ENCODE measurements at regions of chr19 and their contacts with region 1.

Region 1: GRCh38 chr19:17555480-17555928 is at the start of gene COLGALT1:
- DNase-seq: peak; percentile 94 to 100 (median 98)
- ATAC-seq: peak; percentile 98
- H3K4me3 ChIP-seq: peak within 1 kb of the TSS; percentile 94
- H3K4me3 Mint-ChIP-seq: peak within 1 kb of the TSS; percentile 87
- H3K27ac ChIP-seq: peak within 1 kb of the TSS in 1 of 2 donors; percentile 7
- H3K27ac Mint-ChIP-seq: peak within 1 kb of the TSS; percentile 67
- H3K4me1 ChIP-seq: peaks cover 24% of the 10 kb centered on the region
- H3K4me1 Mint-ChIP-seq: peaks cover 21% of the 10 kb centered on the region
- H3K27me3 ChIP-seq: no peaks in the 10 kb centered on the region
- H3K27me3 Mint-ChIP-seq: no peaks in the 10 kb centered on the region
- CTCF ChIP-seq: no peak
- total RNA-seq, gene COLGALT1: 30.3 to 30.6 TPM

Region 2: GRCh38 chr19:17496337-17496997 is 59.0 kb before region 1 on chr19:
- CTCF ChIA-PET with region 1: interaction called, 7 read pairs
- POLR2A ChIA-PET with region 1: no interaction called
- intact Hi-C with region 1: loop called in 1 of 2 experiments (anchors 10 kb)
- DNase-seq: peak; percentile 68 to 91 (median 76)
- ATAC-seq: peak; percentile 99
- H3K4me3 ChIP-seq: no peak overlapping the region
- H3K4me3 Mint-ChIP-seq: no peak overlapping the region
- H3K27ac ChIP-seq: no peak overlapping the region
- H3K27ac Mint-ChIP-seq: no peak overlapping the region
- H3K4me1 ChIP-seq: peaks cover 25% of the 10 kb centered on the region
- H3K4me1 Mint-ChIP-seq: peaks cover 17% of the 10 kb centered on the region
- H3K27me3 ChIP-seq: no peaks in the 10 kb centered on the region
- H3K27me3 Mint-ChIP-seq: no peaks in the 10 kb centered on the region
- CTCF ChIP-seq: peak; percentile 96

Region 3: DNA sequence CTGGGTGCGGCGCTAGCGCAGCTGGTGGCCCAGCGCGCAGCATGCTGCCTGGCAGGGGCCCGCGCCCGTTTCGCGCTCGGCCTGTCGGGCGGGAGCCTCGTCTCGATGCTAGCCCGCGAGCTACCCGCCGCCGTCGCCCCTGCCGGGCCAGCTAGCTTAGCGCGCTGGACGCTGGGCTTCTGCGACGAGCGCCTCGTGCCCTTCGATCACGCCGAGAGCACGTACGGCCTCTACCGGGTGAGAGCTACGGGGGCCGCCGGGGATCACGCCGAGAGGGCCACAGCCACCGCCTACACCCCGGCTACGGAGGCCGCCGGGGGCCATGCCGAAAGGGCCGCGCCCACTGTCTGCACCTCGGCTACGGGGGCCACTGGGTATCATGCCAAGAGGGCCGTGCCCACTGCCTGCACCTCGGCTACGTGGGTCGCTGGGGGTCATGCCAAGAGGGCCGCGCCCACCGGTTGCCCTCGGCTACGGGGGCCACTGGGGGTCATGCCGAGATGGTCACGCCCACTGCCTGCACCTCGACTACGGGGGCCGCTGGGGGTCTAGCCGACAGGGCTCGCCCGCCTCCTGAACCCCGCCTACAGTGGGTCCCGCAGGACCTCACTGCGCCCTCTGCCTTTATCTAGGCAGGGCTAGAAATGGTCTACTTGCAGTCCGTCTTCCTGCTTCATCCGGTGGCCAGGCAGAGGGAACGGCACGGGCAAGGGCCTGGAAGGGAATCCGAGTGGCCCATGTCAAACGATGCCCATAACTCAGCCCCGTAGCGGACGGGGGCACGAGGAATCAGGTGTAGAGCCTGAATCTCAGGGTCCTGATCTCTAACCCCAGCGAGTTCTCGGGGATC is 43.6 kb before region 1 on chr19:
- CTCF ChIA-PET with region 1: no interaction called
- POLR2A ChIA-PET with region 1: interaction called, 7 read pairs
- intact Hi-C with region 1: loop called (anchors 1 to 5 kb)
- DNase-seq: peak; percentile 73 to 92 (median 82)
- ATAC-seq: peak; percentile 75
- H3K4me3 ChIP-seq: peak overlapping the region; percentile 82
- H3K4me3 Mint-ChIP-seq: peak overlapping the region; percentile 93
- H3K27ac ChIP-seq: peak overlapping the region; percentile 64 to 94
- H3K27ac Mint-ChIP-seq: peak overlapping the region; percentile 80
- H3K4me1 ChIP-seq: peaks cover 19% of the 10 kb centered on the region
- H3K4me1 Mint-ChIP-seq: peaks cover 33% of the 10 kb centered on the region
- H3K27me3 ChIP-seq: no peaks in the 10 kb centered on the region
- H3K27me3 Mint-ChIP-seq: no peaks in the 10 kb centered on the region
- CTCF ChIP-seq: no peak

Region 4: DNA sequence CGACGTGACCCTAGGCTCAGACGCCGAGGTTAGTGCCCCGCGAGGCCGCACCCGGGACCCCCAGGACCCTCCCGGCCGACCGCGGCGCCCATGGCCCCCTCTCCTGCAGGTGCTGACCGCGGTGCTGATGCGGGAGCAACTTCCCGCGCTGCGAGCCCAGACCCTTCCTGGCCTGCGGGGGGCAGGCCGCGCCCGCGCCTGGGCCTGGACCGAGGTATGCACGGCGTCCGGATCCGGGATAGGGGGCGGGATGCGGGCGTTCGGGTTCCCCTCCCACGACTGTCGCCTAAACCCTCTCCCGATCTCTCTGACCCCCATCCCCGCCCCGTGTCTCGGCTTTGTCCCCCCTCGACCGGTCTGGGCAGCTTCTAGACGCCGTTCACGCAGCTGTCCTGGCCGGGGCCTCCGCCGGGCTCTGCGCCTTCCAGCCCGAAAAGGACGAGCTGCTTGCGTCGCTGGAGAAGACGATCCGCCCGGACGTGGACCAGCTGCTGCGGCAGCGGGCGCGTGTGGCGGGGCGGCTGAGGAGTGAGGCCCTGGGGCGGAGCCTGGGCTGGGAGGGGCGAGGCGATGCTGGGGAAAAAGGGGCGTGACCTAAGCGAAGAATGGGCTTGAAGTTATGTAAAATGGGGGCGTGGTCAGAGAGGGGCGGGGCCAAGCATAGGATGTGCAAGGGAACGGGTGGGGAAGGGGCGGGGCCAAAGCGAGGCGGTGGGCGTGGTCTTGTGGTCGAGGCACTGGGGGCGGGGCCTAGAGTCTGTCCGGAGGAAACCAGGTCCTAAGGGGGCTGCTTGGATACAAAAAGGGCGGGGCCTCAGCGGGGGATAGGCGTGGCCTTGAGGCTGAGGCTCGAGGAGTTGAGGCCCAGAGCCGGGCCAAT is 16.0 kb before region 1 on chr19:
- CTCF ChIA-PET with region 1: interaction called, 3 read pairs
- POLR2A ChIA-PET with region 1: interaction called, 3 read pairs
- intact Hi-C with region 1: loop called in 1 of 2 experiments (anchors 1 kb)
- DNase-seq: peak; percentile 84 to 99 (median 94)
- ATAC-seq: peak; percentile 96
- H3K4me3 ChIP-seq: peak overlapping the region; percentile 61
- H3K4me3 Mint-ChIP-seq: peak overlapping the region; percentile 93
- H3K27ac ChIP-seq: no peak overlapping the region
- H3K27ac Mint-ChIP-seq: peak overlapping the region; percentile 67
- H3K4me1 ChIP-seq: peaks cover 17% of the 10 kb centered on the region
- H3K4me1 Mint-ChIP-seq: peaks cover 12% of the 10 kb centered on the region
- H3K27me3 ChIP-seq: no peaks in the 10 kb centered on the region
- H3K27me3 Mint-ChIP-seq: no peaks in the 10 kb centered on the region
- CTCF ChIP-seq: peak; percentile 4

Region 5: GRCh38 chr19:17605761-17606745 is 50.5 kb after region 1 on chr19:
- CTCF ChIA-PET with region 1: no interaction called
- POLR2A ChIA-PET with region 1: no interaction called
- intact Hi-C with region 1: no loop called
- DNase-seq: peak; percentile 65 to 95 (median 82)
- ATAC-seq: peak; percentile 97
- H3K4me3 ChIP-seq: peak overlapping the region; percentile 43
- H3K4me3 Mint-ChIP-seq: peak overlapping the region; percentile 81
- H3K27ac ChIP-seq: no peak overlapping the region
- H3K27ac Mint-ChIP-seq: peak overlapping the region; percentile 27
- H3K4me1 ChIP-seq: peaks cover 14% of the 10 kb centered on the region
- H3K4me1 Mint-ChIP-seq: peaks cover 11% of the 10 kb centered on the region
- H3K27me3 ChIP-seq: peaks cover 21 to 25% of the 10 kb centered on the region in 2 experiments
- H3K27me3 Mint-ChIP-seq: peaks cover 36% of the 10 kb centered on the region
- CTCF ChIP-seq: peak; percentile 58

Region 6: GRCh38 chr19:17718947-17719711 is 163.6 kb after region 1 on chr19 and contains the start of gene MAP1S:
- CTCF ChIA-PET with region 1: no interaction called
- POLR2A ChIA-PET with region 1: no interaction called
- intact Hi-C with region 1: loop called in 1 of 2 experiments (anchors 5 kb)
- DNase-seq: peak; percentile 26 to 74 (median 52)
- ATAC-seq: peak; percentile 88
- H3K4me3 ChIP-seq: peak within 1 kb of the TSS; percentile 92
- H3K4me3 Mint-ChIP-seq: peak within 1 kb of the TSS; percentile 95
- H3K27ac ChIP-seq: no peak within 1 kb of the TSS
- H3K27ac Mint-ChIP-seq: peak within 1 kb of the TSS; percentile 90
- H3K4me1 ChIP-seq: peaks cover 39% of the 10 kb centered on the region
- H3K4me1 Mint-ChIP-seq: peaks cover 36% of the 10 kb centered on the region
- H3K27me3 ChIP-seq: no peaks in the 10 kb centered on the region
- H3K27me3 Mint-ChIP-seq: no peaks in the 10 kb centered on the region
- CTCF ChIP-seq: no peak
- total RNA-seq, gene MAP1S: 18.1 to 21.4 TPM

Region 7: DNA sequence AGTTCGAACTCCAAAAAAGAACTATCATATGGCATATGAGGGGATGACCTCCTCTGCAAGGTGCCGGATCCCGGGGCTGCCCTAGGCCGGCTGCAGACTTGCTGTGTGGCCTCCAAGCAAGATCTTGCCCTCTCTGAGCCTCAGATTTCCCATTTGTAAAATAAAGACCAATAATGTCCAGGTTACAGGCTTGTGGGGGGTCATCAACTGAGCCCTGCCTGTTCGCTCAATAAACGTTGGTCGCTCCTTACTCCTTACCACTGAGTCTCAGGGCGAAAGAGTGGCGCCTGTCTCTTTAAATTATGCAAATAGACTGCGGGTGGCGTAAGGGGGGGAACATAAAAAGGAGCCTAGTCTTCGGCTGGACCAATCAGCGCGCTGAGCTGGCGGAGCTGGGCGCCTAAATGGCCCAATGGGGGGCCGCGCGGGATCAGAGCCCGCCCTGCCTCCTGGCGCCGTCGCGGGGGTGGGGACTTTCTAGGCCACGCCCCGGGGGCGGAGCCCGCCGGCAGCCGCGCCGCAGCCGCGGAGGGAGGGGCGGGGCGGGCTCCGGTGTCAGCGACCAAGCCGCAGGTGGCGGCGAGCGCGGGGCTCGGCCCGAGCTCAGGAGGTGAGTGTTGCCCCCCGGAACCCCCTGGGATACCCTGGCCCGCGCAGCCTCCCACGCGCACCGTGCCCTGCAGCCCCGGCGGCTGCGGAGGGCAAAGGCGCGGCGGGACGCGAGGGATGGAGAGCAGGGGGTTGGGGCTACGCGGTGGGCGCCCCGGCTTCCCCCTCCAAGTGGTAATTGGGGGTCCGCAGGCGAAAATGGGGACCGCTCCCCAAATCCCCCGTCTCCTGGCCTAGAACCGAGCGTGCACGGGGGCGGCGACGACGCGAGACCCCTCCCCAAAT is 191.9 kb after region 1 on chr19:
- CTCF ChIA-PET with region 1: no interaction called
- POLR2A ChIA-PET with region 1: no interaction called
- intact Hi-C with region 1: loop called in 1 of 2 experiments (anchors 5 kb)
- DNase-seq: peak; percentile 88 to 98 (median 94)
- ATAC-seq: peak; percentile 87
- H3K4me3 ChIP-seq: peak overlapping the region; percentile 69
- H3K4me3 Mint-ChIP-seq: peak overlapping the region; percentile 96
- H3K27ac ChIP-seq: no peak overlapping the region
- H3K27ac Mint-ChIP-seq: peak overlapping the region; percentile 82
- H3K4me1 ChIP-seq: peaks cover 56% of the 10 kb centered on the region
- H3K4me1 Mint-ChIP-seq: peaks cover 47% of the 10 kb centered on the region
- H3K27me3 ChIP-seq: no peaks in the 10 kb centered on the region
- H3K27me3 Mint-ChIP-seq: no peaks in the 10 kb centered on the region
- CTCF ChIP-seq: no peak